Lower leg skin (tissue), 4 donors: ENCODE measurements at regions of chr3 and their contacts with region 1.

Region 1: GRCh38 chr3:16247276-16248061 is 17.3 kb downstream of the DPH3 start:
- DNase-seq: peak; percentile 79 to 94
- H3K4me3 ChIP-seq: no peak overlapping the region
- CTCF ChIP-seq: peak in 1 of 3 donors; percentile 35
- POLR2A ChIP-seq: no peak

Region 2: GRCh38 chr3:15815696-15816095 is 431.8 kb before region 1 on chr3:
- intact Hi-C with region 1: loop called (anchors 10 kb)
- DNase-seq: no peak
- H3K4me3 ChIP-seq: no peak overlapping the region
- CTCF ChIP-seq: no peak
- POLR2A ChIP-seq: no peak

Region 3: GRCh38 chr3:16048435-16049318 is 198.8 kb before region 1 on chr3:
- intact Hi-C with region 1: loop called (anchors 5 kb)
- DNase-seq: peak in 1 of 2 donors; percentile 58
- H3K4me3 ChIP-seq: no peak overlapping the region
- CTCF ChIP-seq: peak in 1 of 3 donors; percentile 81
- POLR2A ChIP-seq: no peak